ENCODE measurements at regions of chr12 and their contacts with region 1.

Region 1: GRCh38 chr12:51025836-51026638 is at the start of gene SLC11A2:
- DNase-seq: peak; percentile 92 to 95
- H3K4me3 ChIP-seq: peak within 1 kb of the TSS; percentile 54 to 72 (median 64)
- H3K27ac ChIP-seq: peak within 1 kb of the TSS; percentile 90
- H3K4me1 ChIP-seq: peaks cover 9 to 16% (median 13%) of the 10 kb centered on the region in 4 experiments
- H3K27me3 ChIP-seq: no peaks in the 10 kb centered on the region; a peak in 1 of 7 replicates
- CTCF ChIP-seq: no peak; a peak in 1 of 4 replicates
- EP300 ChIP-seq: 0 out of 3 replicates have a peak, but pooled peaks of 1 of the 2 experiments have one; percentile 61
- POLR2A ChIP-seq: peak; percentile 81 to 87
- RAD21 ChIP-seq: 0 out of 4 replicates have a peak, but pooled peaks of 1 of the 2 experiments have one; percentile 3
- total RNA-seq, gene SLC11A2: 59.3 and 61.5 TPM in 2 replicates

Region 2: GRCh38 chr12:50825372-50825838 is 200.6 kb before region 1 on chr12:
- CTCF ChIA-PET with region 1: interaction called, 25 read pairs
- POLR2A ChIA-PET with region 1: interaction called, 6 read pairs
- DNase-seq: no peak
- H3K4me3 ChIP-seq: no peak overlapping the region
- H3K27ac ChIP-seq: no peak overlapping the region
- H3K4me1 ChIP-seq: no peaks in the 10 kb centered on the region
- H3K27me3 ChIP-seq: no peaks in the 10 kb centered on the region
- CTCF ChIP-seq: peak in 2 of 3 experiments; percentile 25 to 31; a peak in 2 of 4 replicates
- EP300 ChIP-seq: no peak
- POLR2A ChIP-seq: no peak
- RAD21 ChIP-seq: peak in 1 of 2 experiments; percentile 56

Region 3: DNA sequence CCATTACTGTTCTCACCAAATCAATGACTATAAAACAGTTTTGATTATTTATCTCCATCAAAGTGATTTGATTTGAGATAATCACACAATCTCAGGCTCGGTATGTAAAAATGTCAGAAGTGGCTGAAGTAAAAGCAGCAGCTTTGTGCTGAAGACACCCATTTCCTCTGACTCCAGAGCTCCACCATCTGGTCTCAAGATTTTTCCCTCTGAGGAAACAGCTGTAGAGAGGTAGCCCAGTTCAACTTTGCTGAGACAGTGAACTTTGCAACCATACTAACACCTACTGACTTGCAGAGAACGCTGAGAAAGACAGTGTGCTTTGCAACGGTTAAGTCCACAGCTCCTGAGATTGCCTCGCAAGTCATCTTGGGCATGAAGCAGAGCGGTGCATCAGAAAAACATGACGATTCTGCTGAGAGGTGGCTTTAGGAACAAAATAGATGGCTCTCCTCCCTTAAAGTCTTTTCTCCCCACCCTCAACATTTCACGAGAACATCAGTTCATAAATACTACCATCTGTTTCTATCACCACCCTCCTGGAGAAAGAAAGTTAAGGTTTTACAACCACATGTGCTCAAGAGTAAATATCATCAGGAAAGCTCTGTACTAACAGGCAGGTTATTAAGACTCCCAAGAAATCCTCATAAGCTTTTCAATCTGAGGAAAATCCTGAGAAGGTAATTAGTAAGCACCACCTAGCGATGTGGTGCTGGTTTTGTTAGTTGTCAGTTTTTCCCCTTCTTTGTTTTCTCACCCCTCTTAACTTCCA is 38.9 kb before region 1 on chr12:
- CTCF ChIA-PET with region 1: interaction called, 40 read pairs
- POLR2A ChIA-PET with region 1: interaction called, 3 read pairs
- DNase-seq: no peak
- H3K4me3 ChIP-seq: no peak overlapping the region
- H3K27ac ChIP-seq: no peak overlapping the region
- H3K4me1 ChIP-seq: no peaks in the 10 kb centered on the region; a peak in 1 of 7 replicates
- H3K27me3 ChIP-seq: no peaks in the 10 kb centered on the region
- CTCF ChIP-seq: peak in 2 of 3 experiments; percentile 72 to 81; a peak in 3 of 4 replicates
- EP300 ChIP-seq: no peak
- POLR2A ChIP-seq: no peak
- RAD21 ChIP-seq: peak; percentile 78 to 87

Region 4: GRCh38 chr12:51009056-51009440 is 17.0 kb before region 1 on chr12:
- CTCF ChIA-PET with region 1: interaction called, 66 read pairs
- POLR2A ChIA-PET with region 1: interaction called, 20 read pairs
- DNase-seq: no peak
- H3K4me3 ChIP-seq: no peak overlapping the region
- H3K27ac ChIP-seq: no peak overlapping the region
- H3K4me1 ChIP-seq: peaks cover 0 to 6% (median 3%) of the 10 kb centered on the region in 4 experiments; a peak in 4 of 7 replicates
- H3K27me3 ChIP-seq: no peaks in the 10 kb centered on the region
- CTCF ChIP-seq: no peak
- EP300 ChIP-seq: no peak
- POLR2A ChIP-seq: no peak
- RAD21 ChIP-seq: no peak

Region 5: GRCh38 chr12:51047655-51048540 is 21.9 kb after region 1 on chr12 and contains the start of gene LETMD1:
- CTCF ChIA-PET with region 1: interaction called, 9 read pairs
- POLR2A ChIA-PET with region 1: interaction called, 10 read pairs
- DNase-seq: peak; percentile 82 to 96
- H3K4me3 ChIP-seq: peak within 1 kb of the TSS; percentile 53 to 81 (median 78)
- H3K27ac ChIP-seq: peak within 1 kb of the TSS; percentile 51; the same call in 1 of the 2 replicates
- H3K4me1 ChIP-seq: peaks cover 0 to 4% (median 1%) of the 10 kb centered on the region in 4 experiments; a peak in 3 of 7 replicates
- H3K27me3 ChIP-seq: no peaks in the 10 kb centered on the region
- CTCF ChIP-seq: peak; percentile 88 to 93 (median 92)
- EP300 ChIP-seq: no peak
- POLR2A ChIP-seq: peak; percentile 38 to 78
- RAD21 ChIP-seq: peak; percentile 73 to 82
- total RNA-seq, gene LETMD1: 31.9 and 39.4 TPM in 2 replicates

Measured in H1 (cell line).